ENCODE measurements at regions of chr13 and their contacts with region 1.

Region 1: DNA sequence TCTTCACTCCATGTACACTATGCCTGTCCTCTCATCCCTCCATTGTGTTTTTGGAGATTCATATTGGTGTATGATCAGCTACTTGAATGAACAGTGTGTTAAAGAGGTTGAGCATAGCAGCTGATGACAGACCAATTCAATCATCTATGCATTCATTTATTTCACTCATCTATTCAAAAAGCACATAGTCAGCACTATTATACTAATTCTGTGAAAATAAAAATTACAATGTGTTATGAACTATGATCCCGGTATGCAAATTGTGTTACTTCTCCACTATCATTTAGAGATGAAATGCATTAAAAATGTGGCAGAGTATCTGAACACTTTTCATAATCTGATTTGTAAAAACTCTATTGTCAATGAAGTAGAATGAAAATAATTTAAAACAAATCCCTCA is 5.9 kb downstream of the TRPC4 start:
- DNase-seq: no peak
- H3K4me3 ChIP-seq: no peak overlapping the region
- H3K27ac ChIP-seq: no peak overlapping the region
- H3K4me1 ChIP-seq: no peaks in the 10 kb centered on the region
- H3K27me3 ChIP-seq: peaks cover 3% of the 10 kb centered on the region
- CTCF ChIP-seq: no peak
- EP300 ChIP-seq: no peak
- POLR2A ChIP-seq: no peak

Region 2: DNA sequence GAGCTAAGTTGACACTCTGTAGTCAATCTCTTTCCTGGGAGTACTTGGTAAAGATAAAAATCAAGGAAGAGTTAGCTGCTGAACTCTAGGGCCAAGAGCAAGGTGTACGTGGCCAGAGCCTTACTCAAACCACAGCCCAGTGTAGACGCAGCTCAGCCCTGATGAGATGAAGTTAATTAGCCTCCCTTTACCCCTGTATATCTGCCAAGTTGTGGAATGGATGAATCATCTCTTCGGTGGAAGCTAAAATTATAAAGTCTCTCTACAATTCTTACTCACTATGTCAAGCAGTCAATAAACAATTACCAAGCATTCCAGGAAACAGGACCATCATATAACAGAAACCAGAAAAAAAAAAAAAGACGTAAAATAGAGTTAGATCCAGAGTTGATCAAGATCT is 339.0 kb after region 1 on chr13:
- in situ Hi-C with region 1: no loop called
- intact Hi-C with region 1: loop called (anchors 5 kb)
- DNase-seq: no peak
- H3K4me3 ChIP-seq: no peak overlapping the region
- H3K27ac ChIP-seq: no peak overlapping the region
- H3K4me1 ChIP-seq: no peaks in the 10 kb centered on the region
- H3K27me3 ChIP-seq: no peaks in the 10 kb centered on the region
- CTCF ChIP-seq: no peak
- EP300 ChIP-seq: no peak
- POLR2A ChIP-seq: no peak

Measured in transverse colon (tissue), 4 donors.